Endothelial cell of umbilical vein (primary cell): ENCODE measurements at regions of chr7 and their contacts with region 1.

Region 1: GRCh38 chr7:117458977-117459583 is 20.7 kb upstream of the CFTR start:
- DNase-seq: peak; percentile 26
- H3K4me3 ChIP-seq: no peak overlapping the region
- H3K27ac ChIP-seq: no peak overlapping the region
- H3K4me1 ChIP-seq: no peaks in the 10 kb centered on the region
- H3K27me3 ChIP-seq: no peaks in the 10 kb centered on the region
- CTCF ChIP-seq: peak; percentile 35 to 42
- POLR2A ChIP-seq: no peak

Region 2: GRCh38 chr7:117479225-117480054 is 20.4 kb after region 1 on chr7 and contains the start of gene CFTR:
- CTCF ChIA-PET with region 1: interaction called, 12 read pairs
- POLR2A ChIA-PET with region 1: no interaction called
- dilution Hi-C with region 1: no loop called
- intact Hi-C with region 1: no loop called
- DNase-seq: no peak
- H3K4me3 ChIP-seq: peak within 1 kb of the TSS in 2 of 3 experiments; percentile 26 to 44
- H3K27ac ChIP-seq: no peak within 1 kb of the TSS
- H3K4me1 ChIP-seq: no peaks in the 10 kb centered on the region
- H3K27me3 ChIP-seq: peaks cover 32 to 48% of the 10 kb centered on the region in 2 experiments
- CTCF ChIP-seq: no peak
- POLR2A ChIP-seq: no peak
- total RNA-seq, gene CFTR: not detected in 2 replicates

Region 3: DNA sequence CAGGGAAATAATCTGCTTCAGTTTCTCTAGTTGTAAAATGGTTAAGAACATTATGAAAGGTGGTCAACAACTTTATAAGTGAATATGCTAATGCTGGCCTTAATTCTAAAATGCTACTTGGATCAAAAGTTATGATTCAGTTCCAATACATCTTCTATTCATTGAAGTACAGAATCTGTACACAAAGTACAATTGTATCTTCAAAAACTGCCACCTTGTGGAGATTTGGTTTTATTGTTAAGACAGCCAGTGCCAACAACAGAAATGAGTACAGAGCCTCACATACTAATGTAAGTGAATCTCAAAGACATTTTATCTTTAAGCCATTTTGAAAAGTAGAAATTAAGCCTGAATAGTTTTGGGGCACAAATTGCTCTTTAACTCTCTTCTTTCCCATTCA is 214.8 kb after region 1 on chr7:
- CTCF ChIA-PET with region 1: interaction called, 75 read pairs
- POLR2A ChIA-PET with region 1: no interaction called
- dilution Hi-C with region 1: no loop called
- intact Hi-C with region 1: loop called (anchors 1 kb)
- DNase-seq: peak; percentile 56
- H3K4me3 ChIP-seq: no peak overlapping the region
- H3K27ac ChIP-seq: no peak overlapping the region
- H3K4me1 ChIP-seq: no peaks in the 10 kb centered on the region
- H3K27me3 ChIP-seq: peaks cover 0 to 2% of the 10 kb centered on the region in 2 experiments
- CTCF ChIP-seq: peak; percentile 16 to 28
- POLR2A ChIP-seq: no peak

Region 4: GRCh38 chr7:117715784-117716445 is 256.8 kb after region 1 on chr7:
- CTCF ChIA-PET with region 1: interaction called, 238 read pairs
- POLR2A ChIA-PET with region 1: no interaction called
- dilution Hi-C with region 1: no loop called
- intact Hi-C with region 1: loop called (anchors 1 kb)
- DNase-seq: peak; percentile 64
- H3K4me3 ChIP-seq: no peak overlapping the region
- H3K27ac ChIP-seq: no peak overlapping the region
- H3K4me1 ChIP-seq: no peaks in the 10 kb centered on the region
- H3K27me3 ChIP-seq: peaks cover 0 to 2% of the 10 kb centered on the region in 2 experiments
- CTCF ChIP-seq: peak; percentile 41 to 62
- POLR2A ChIP-seq: no peak

Region 5: GRCh38 chr7:118153551-118154177 is 694.6 kb after region 1 on chr7:
- CTCF ChIA-PET with region 1: interaction called, 32 read pairs
- POLR2A ChIA-PET with region 1: no interaction called
- dilution Hi-C with region 1: no loop called
- intact Hi-C with region 1: no loop called
- DNase-seq: peak; percentile 57
- H3K4me3 ChIP-seq: no peak overlapping the region
- H3K27ac ChIP-seq: no peak overlapping the region
- H3K4me1 ChIP-seq: no peaks in the 10 kb centered on the region
- H3K27me3 ChIP-seq: peaks cover 0 to 6% of the 10 kb centered on the region in 2 experiments
- CTCF ChIP-seq: peak in 1 of 2 donors; percentile 40
- POLR2A ChIP-seq: no peak